Psoas muscle (tissue), 8 donors: ENCODE measurements at regions of chr3 and their contacts with region 1.

Region 1: GRCh38 chr3:112531358-112531781 is 30.4 kb downstream of the ATG3 start:
- DNase-seq: no peak
- ATAC-seq: no peak
- H3K4me3 ChIP-seq: no peak overlapping the region
- H3K27ac ChIP-seq: no peak overlapping the region
- H3K4me1 ChIP-seq: no peaks in the 10 kb centered on the region
- H3K27me3 ChIP-seq: no peaks in the 10 kb centered on the region
- CTCF ChIP-seq: peak; percentile 48

Region 2: DNA sequence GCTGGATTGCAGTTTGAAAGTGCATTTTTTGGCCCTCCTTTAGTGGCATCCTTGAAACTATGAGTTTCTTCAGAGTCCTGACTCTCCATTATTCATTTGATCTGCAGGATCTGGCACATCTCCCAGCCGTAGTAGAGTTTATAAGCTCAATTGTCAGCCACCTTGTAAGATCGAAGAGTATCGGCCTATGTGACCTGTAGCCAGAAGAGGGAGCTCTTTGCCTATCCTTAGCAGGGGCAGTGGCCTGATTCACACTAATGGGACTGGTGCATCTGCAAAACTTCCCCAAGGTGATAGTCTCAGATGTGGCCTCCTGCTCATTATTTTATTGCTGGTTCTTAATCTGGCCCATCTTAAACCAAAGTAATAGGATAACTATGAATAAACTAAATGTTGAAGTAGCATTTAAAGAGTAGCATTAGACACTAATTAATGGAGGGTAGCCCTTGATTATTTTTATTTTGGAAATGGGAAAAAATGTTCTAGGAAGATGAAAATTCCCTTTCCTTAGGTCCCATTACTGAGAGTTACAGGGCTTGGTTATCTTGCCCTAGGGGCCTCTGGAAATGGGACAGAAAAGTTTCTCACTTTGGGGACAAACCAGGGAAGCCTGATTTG is 419.5 kb before region 1 on chr3:
- intact Hi-C with region 1: loop called in 1 of 2 experiments (anchors 10 kb)
- DNase-seq: no peak
- ATAC-seq: peak in 3 of 4 donors; percentile 48 to 66 (median 59)
- H3K4me3 ChIP-seq: no peak overlapping the region
- H3K27ac ChIP-seq: no peak overlapping the region
- H3K4me1 ChIP-seq: no peaks in the 10 kb centered on the region
- H3K27me3 ChIP-seq: no peaks in the 10 kb centered on the region
- CTCF ChIP-seq: peak; percentile 50

Region 3: DNA sequence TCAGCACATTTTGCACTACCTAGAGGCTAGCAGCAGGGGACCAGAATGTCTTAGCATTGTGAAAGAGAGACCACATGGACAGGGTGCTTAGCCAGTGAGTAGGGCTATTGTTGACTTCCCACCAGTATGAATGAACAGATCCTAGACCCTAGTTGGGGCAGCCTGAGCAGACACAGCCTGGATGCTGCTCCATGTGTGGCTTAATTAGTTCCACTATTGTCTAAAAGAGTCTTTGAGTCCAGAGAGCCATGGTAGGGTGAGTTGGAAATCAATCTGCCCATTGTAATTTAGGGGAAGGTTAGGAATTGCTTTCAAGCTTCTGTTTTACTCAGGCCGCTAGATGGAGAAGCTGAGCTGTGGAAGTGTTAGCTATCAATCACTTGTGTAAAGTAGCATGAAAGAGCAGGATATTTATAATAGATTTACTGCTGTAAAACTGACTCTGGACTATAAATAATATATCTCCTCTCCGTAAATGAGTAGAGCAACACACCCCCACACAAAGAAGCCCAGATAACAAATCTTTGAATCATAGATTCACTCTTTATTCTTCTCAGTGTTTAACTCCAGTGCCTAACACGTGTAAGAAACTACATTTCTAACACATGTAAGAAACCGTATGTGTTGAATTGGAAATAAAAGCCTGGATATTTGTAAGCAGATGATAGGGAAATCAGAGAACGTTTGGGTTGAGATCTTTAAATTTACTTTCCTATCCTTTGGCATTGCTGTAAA is 394.2 kb before region 1 on chr3:
- intact Hi-C with region 1: loop called (anchors 5 kb)
- DNase-seq: no peak
- ATAC-seq: peak in 3 of 4 donors; percentile 43 to 72 (median 44)
- H3K4me3 ChIP-seq: no peak overlapping the region
- H3K27ac ChIP-seq: no peak overlapping the region
- H3K4me1 ChIP-seq: peaks cover 4% of the 10 kb centered on the region
- H3K27me3 ChIP-seq: no peaks in the 10 kb centered on the region
- CTCF ChIP-seq: peak; percentile 43

Region 4: DNA sequence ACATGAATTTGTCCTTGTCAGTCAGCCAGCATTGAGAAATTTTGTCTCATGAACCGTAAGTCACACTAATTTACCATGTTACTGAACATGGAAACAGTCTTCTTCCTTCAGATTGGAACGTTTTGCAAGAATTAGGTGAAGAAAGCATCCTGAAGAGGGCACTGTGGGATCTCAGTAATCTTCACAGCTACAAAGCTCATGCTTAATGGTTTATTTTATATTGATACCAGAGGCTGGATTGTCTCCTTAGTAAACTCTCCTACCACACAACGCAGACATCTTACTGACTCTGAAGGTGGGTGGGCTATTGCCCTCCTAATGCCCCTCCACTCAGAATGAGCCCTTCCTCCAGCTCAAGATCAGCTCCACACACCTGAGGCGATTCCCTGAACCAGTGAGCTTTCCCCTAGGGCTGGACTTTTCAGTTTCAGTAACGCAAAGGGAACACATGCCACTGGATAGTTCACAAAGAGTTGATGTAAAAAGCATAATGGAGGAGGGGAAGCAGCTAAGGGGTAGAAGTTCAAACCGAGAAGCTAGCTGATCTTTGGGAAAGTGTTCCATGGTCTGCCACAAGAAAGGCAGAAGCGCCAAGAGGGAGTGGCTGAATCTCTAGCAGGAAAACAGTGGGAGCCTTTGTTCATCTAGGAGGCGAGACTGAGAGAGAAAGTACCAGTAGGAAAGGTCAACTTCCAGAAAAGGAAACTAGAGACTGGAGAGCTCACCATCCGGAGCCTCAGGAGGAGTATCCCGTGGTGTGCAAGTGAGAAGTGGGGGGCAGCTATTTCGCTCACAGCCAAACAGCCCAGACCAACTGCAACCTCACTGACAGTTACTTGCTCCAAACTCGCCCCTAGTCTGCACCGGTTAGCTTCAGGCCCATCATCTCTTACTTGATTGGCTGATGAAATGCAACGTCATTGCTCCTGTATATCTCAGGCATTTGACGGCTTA is 237.7 kb before region 1 on chr3 and contains the start of gene SLC9C1:
- intact Hi-C with region 1: loop called in 1 of 2 experiments (anchors 2 kb)
- DNase-seq: no peak
- ATAC-seq: peak in 3 of 4 donors; percentile 59 to 67 (median 62)
- H3K4me3 ChIP-seq: peak within 1 kb of the TSS; percentile 55
- H3K27ac ChIP-seq: no peak within 1 kb of the TSS
- H3K4me1 ChIP-seq: no peaks in the 10 kb centered on the region
- H3K27me3 ChIP-seq: no peaks in the 10 kb centered on the region
- CTCF ChIP-seq: peak; percentile 49
- total RNA-seq, gene SLC9C1: 0.10 to 0.32 (median 0.19) TPM